IMR-90 (cell line): ENCODE measurements at regions of chr6 and their contacts with region 1.

Region 1: GRCh38 chr6:24581084-24581669 is 64.8 kb downstream of the KIAA0319 start:
- DNase-seq: peak; percentile 50
- ATAC-seq: peak; percentile 89
- H3K4me3 ChIP-seq: no peak overlapping the region
- H3K27ac ChIP-seq: no peak overlapping the region
- H3K4me1 ChIP-seq: no peaks in the 10 kb centered on the region
- H3K27me3 ChIP-seq: peaks cover 11% of the 10 kb centered on the region
- CTCF ChIP-seq: peak; percentile 76
- POLR2A ChIP-seq: no peak
- RAD21 ChIP-seq: peak; percentile 70

Region 2: DNA sequence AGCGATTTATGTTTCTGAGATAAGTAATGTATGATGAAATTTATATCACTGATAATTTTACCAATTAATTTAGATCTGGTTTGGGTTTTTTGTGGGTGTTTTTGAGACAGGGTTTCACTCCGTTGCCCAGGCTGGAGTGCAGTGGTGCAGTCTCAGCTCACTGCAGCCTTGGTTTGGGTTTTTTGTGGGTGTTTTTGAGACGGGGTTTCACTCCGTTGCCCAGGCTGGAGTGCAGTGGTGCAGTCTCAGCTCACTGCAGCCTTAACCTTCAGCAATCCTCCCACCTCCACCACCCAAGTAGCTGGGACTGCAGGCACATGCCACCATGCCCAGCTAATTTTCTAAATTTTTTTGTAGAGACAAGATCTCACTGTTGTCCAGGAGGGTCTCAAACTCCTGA is 165.4 kb before region 1 on chr6:
- CTCF ChIA-PET with region 1: no interaction called
- POLR2A ChIA-PET with region 1: no interaction called
- dilution Hi-C with region 1: no loop called
- in situ Hi-C with region 1: no loop called
- intact Hi-C with region 1: no loop called
- DNase-seq: no peak
- ATAC-seq: no peak
- H3K4me3 ChIP-seq: no peak overlapping the region
- H3K27ac ChIP-seq: no peak overlapping the region
- H3K4me1 ChIP-seq: no peaks in the 10 kb centered on the region
- H3K27me3 ChIP-seq: no peaks in the 10 kb centered on the region
- CTCF ChIP-seq: no peak
- POLR2A ChIP-seq: no peak
- RAD21 ChIP-seq: no peak

Region 3: DNA sequence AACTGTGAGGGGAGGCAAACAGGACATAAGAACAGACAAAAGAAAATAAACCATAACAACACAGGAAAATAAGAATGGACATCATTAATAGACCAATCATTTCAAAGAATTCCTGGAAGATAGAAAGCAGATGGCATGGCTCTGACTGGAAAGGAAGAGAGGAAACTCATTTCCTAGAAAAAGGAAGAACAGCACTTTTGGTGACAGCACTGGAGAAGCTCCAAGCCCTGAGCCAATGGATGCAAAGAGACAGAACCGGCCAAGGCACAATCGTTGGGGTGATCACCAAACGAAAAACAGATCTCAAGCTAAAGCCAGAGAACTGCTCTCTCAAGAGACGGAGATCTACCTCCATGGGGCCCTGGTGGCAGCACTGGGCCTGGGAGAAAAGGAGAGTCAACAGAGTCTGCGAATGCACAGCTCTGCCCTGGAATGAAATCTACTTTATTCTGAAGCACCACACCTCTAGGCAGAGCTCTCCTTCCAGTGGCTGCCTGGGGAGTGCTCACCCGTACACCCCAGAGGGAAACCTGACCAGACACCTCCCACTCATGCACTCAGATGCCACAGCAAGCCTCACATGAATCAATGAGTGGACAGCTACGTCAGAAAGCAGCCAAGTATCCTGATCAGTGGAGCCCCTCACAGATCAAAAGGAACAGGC is 40.6 kb after region 1 on chr6:
- CTCF ChIA-PET with region 1: no interaction called
- POLR2A ChIA-PET with region 1: no interaction called
- dilution Hi-C with region 1: no loop called
- in situ Hi-C with region 1: no loop called
- intact Hi-C with region 1: no loop called
- DNase-seq: no peak
- ATAC-seq: no peak
- H3K4me3 ChIP-seq: no peak overlapping the region
- H3K27ac ChIP-seq: no peak overlapping the region
- H3K4me1 ChIP-seq: no peaks in the 10 kb centered on the region
- H3K27me3 ChIP-seq: no peaks in the 10 kb centered on the region
- CTCF ChIP-seq: no peak
- POLR2A ChIP-seq: no peak
- RAD21 ChIP-seq: no peak

Region 4: GRCh38 chr6:24689964-24690363 is 108.8 kb after region 1 on chr6:
- CTCF ChIA-PET with region 1: interaction called, 3 read pairs
- POLR2A ChIA-PET with region 1: no interaction called
- dilution Hi-C with region 1: no loop called
- in situ Hi-C with region 1: loop called (anchors 5 kb)
- intact Hi-C with region 1: loop called (anchors 1 kb)
- DNase-seq: no peak
- ATAC-seq: peak; percentile 46; the same call in 1 of the 2 replicates
- H3K4me3 ChIP-seq: no peak overlapping the region
- H3K27ac ChIP-seq: no peak overlapping the region
- H3K4me1 ChIP-seq: no peaks in the 10 kb centered on the region
- H3K27me3 ChIP-seq: no peaks in the 10 kb centered on the region
- CTCF ChIP-seq: no peak
- POLR2A ChIP-seq: no peak
- RAD21 ChIP-seq: no peak

Region 5: GRCh38 chr6:24699521-24700359 is 118.6 kb after region 1 on chr6:
- CTCF ChIA-PET with region 1: interaction called, 4 read pairs
- POLR2A ChIA-PET with region 1: no interaction called
- dilution Hi-C with region 1: no loop called
- in situ Hi-C with region 1: loop called (anchors 5 kb)
- intact Hi-C with region 1: loop called (anchors 1 kb)
- DNase-seq: no peak
- ATAC-seq: no peak
- H3K4me3 ChIP-seq: no peak overlapping the region
- H3K27ac ChIP-seq: no peak overlapping the region
- H3K4me1 ChIP-seq: no peaks in the 10 kb centered on the region
- H3K27me3 ChIP-seq: no peaks in the 10 kb centered on the region
- CTCF ChIP-seq: no peak
- POLR2A ChIP-seq: no peak
- RAD21 ChIP-seq: no peak

Region 6: DNA sequence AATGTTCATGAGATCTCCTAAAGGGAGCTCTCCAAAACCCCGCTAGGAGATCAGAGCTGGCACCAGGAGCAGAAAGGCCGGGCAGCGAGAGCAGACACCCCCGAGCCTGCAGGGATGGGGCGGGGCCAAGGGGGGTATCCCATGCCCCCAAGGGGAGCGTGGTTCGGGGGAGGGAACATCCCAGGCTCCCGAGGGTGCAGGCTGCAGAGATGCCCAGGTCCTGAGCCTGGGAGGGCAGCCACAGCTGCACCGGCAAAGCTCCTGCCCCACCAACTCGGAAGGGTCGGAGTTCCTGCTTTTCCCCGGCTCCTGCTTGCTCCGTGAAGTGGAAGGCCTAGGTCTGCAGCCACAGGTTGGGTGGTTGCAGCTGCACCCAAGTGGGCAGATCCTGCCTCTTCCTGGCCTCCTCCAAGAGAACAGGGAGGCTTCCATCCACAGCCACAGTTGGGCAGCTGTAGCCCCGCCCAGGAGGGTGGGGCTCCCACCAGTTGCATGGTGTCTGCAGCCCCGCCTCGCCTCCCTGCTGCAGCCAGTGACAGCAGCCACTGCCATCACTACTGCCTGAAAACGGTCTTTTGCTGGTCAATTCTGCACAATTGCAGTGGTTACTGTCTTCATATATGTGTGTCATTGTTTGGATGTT is 180.1 kb after region 1 on chr6:
- CTCF ChIA-PET with region 1: interaction called, 7 read pairs
- POLR2A ChIA-PET with region 1: interaction called, 3 read pairs
- dilution Hi-C with region 1: no loop called
- in situ Hi-C with region 1: loop called (anchors 5 kb)
- intact Hi-C with region 1: loop called (anchors 1 kb)
- DNase-seq: no peak
- ATAC-seq: peak; percentile 66; the same call in 1 of the 2 replicates
- H3K4me3 ChIP-seq: no peak overlapping the region
- H3K27ac ChIP-seq: no peak overlapping the region
- H3K4me1 ChIP-seq: no peaks in the 10 kb centered on the region; the same call in 1 of the 2 replicates
- H3K27me3 ChIP-seq: no peaks in the 10 kb centered on the region
- CTCF ChIP-seq: no peak
- POLR2A ChIP-seq: no peak
- RAD21 ChIP-seq: no peak

Region 7: GRCh38 chr6:24766680-24767462 is 185.7 kb after region 1 on chr6:
- CTCF ChIA-PET with region 1: interaction called, 7 read pairs
- POLR2A ChIA-PET with region 1: no interaction called
- dilution Hi-C with region 1: no loop called
- in situ Hi-C with region 1: loop called (anchors 5 kb)
- intact Hi-C with region 1: loop called (anchors 1 kb)
- DNase-seq: peak; percentile 49
- ATAC-seq: peak; percentile 75
- H3K4me3 ChIP-seq: no peak overlapping the region
- H3K27ac ChIP-seq: no peak overlapping the region
- H3K4me1 ChIP-seq: peaks cover 2% of the 10 kb centered on the region; the same call in 1 of the 2 replicates
- H3K27me3 ChIP-seq: no peaks in the 10 kb centered on the region
- CTCF ChIP-seq: peak; percentile 68
- POLR2A ChIP-seq: no peak
- RAD21 ChIP-seq: peak; percentile 73

Region 8: DNA sequence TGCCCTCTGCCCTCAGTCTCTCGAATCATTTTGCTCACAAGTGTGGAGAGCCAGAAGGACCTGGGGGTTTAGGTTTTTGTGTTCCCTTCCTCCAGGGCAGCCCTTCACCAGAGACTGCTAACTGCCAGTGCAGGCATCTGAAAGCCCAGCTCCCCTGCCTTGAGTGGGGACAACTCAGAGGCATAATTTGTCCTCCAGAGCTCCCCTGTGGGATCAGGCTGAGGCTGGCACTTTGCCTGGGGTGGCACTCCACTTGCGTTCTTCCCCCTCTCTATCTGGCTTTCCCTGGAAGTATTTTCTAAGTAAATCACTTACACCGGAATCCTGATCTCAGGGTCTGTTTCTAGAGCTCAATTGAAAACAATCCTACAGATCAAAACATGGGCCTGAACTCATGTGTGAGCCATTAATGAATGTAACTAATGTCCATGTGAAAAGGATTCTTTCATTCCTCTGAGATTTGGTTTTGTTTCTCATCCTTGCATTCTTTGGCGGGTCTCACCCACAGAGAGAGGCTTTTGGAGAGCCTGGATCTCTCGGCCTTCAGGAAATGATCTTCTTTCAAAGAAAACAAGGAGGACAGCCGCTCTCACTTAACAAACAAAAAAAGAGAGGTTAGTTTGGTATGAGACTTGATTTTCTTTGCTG is 480.2 kb after region 1 on chr6:
- CTCF ChIA-PET with region 1: no interaction called
- POLR2A ChIA-PET with region 1: no interaction called
- dilution Hi-C with region 1: no loop called
- in situ Hi-C with region 1: loop called (anchors 10 kb)
- intact Hi-C with region 1: no loop called
- DNase-seq: peak; percentile 14
- ATAC-seq: peak; percentile 67
- H3K4me3 ChIP-seq: no peak overlapping the region
- H3K27ac ChIP-seq: peak overlapping the region; percentile 59; the same call in 1 of the 2 replicates
- H3K4me1 ChIP-seq: peaks cover 12% of the 10 kb centered on the region
- H3K27me3 ChIP-seq: no peaks in the 10 kb centered on the region
- CTCF ChIP-seq: no peak
- POLR2A ChIP-seq: no peak
- RAD21 ChIP-seq: no peak

Region 9: GRCh38 chr6:25601800-25602673 is 1020.9 kb after region 1 on chr6:
- CTCF ChIA-PET with region 1: no interaction called
- POLR2A ChIA-PET with region 1: no interaction called
- dilution Hi-C with region 1: no loop called
- in situ Hi-C with region 1: loop called (anchors 25 kb)
- intact Hi-C with region 1: loop called (anchors 5 kb)
- DNase-seq: peak; percentile 67
- ATAC-seq: peak; percentile 62
- H3K4me3 ChIP-seq: no peak overlapping the region
- H3K27ac ChIP-seq: no peak overlapping the region
- H3K4me1 ChIP-seq: no peaks in the 10 kb centered on the region
- H3K27me3 ChIP-seq: no peaks in the 10 kb centered on the region
- CTCF ChIP-seq: peak; percentile 72
- POLR2A ChIP-seq: no peak
- RAD21 ChIP-seq: peak; percentile 71